PC-9 (cell line): ENCODE measurements at regions of chr5 and their contacts with region 1.

Region 1: DNA sequence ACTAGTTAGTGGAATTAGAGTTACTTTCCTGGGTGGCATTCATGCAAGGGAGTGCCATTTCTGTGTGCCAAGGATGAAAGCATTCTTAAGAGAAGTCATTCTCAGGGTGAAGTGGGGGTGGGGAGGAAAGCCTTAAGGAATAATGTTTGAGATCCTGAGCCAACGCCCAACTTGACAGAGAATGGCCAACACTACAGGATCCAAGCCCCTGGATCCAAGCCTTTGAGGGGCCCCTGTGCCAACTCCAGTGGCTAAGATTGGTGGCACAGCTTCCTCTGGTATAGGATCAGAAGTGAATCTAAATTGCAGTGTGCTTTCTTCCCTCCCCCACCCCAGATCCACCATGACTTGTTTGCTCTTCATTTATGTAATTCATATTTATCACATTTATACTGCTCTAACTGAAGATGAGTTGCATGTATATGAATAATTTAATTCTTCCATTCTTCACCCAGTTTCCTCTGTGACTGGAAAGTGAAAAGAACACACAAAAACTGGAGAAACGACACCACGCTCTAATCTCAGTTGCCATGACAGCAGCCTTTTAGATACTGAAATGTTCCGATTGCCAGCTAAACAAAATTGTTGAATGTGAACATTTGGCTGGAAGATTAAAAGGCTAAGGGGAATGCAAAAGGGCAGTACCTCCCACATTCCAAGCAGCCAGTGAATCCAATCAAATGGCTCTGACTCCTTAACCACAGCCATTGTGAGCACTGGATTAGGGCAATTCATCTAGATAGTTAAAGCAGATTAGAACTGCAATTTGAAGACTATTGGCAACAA is 4.5 kb downstream of the ZNF608 start:
- DNase-seq: peak; percentile 57 to 63
- H3K4me3 ChIP-seq: no peak overlapping the region
- H3K27ac ChIP-seq: no peak overlapping the region
- H3K4me1 ChIP-seq: peaks cover 19% of the 10 kb centered on the region
- H3K27me3 ChIP-seq: no peaks in the 10 kb centered on the region
- CTCF ChIP-seq: no peak

Region 2: GRCh38 chr5:122845229-122846050 is 1896.5 kb before region 1 on chr5 and contains the start of gene SNX24:
- CTCF ChIA-PET with region 1: no interaction called
- POLR2A ChIA-PET with region 1: no interaction called
- intact Hi-C with region 1: loop called (anchors 5 kb)
- DNase-seq: peak; percentile 70 to 76
- H3K4me3 ChIP-seq: peak within 1 kb of the TSS; percentile 64
- H3K27ac ChIP-seq: peak within 1 kb of the TSS; percentile 87
- H3K4me1 ChIP-seq: peaks cover 55% of the 10 kb centered on the region
- H3K27me3 ChIP-seq: no peaks in the 10 kb centered on the region
- CTCF ChIP-seq: no peak
- total RNA-seq, gene SNX24: 21.5 and 22.3 TPM in 2 replicates

Region 3: GRCh38 chr5:124583469-124584350 is 158.2 kb before region 1 on chr5:
- CTCF ChIA-PET with region 1: no interaction called
- POLR2A ChIA-PET with region 1: no interaction called
- intact Hi-C with region 1: loop called (anchors 5 kb)
- DNase-seq: peak; percentile 16 to 77
- H3K4me3 ChIP-seq: no peak overlapping the region
- H3K27ac ChIP-seq: peak overlapping the region; percentile 28
- H3K4me1 ChIP-seq: peaks cover 12% of the 10 kb centered on the region
- H3K27me3 ChIP-seq: no peaks in the 10 kb centered on the region
- CTCF ChIP-seq: no peak

Region 4: GRCh38 chr5:124628721-124629596 is 112.9 kb before region 1 on chr5:
- CTCF ChIA-PET with region 1: no interaction called
- POLR2A ChIA-PET with region 1: no interaction called
- intact Hi-C with region 1: loop called (anchors 1 kb)
- DNase-seq: peak; percentile 85 to 86
- H3K4me3 ChIP-seq: peak overlapping the region; percentile 27; the same call in 1 of the 2 replicates
- H3K27ac ChIP-seq: peak overlapping the region; percentile 24
- H3K4me1 ChIP-seq: peaks cover 30% of the 10 kb centered on the region
- H3K27me3 ChIP-seq: no peaks in the 10 kb centered on the region
- CTCF ChIP-seq: no peak

Region 5: GRCh38 chr5:124661317-124662141 is 80.4 kb before region 1 on chr5:
- CTCF ChIA-PET with region 1: interaction called, 7 read pairs
- POLR2A ChIA-PET with region 1: interaction called, 29 read pairs
- intact Hi-C with region 1: loop called (anchors 1 kb)
- DNase-seq: peak; percentile 70 to 98
- H3K4me3 ChIP-seq: peak overlapping the region; percentile 29; the same call in 1 of the 2 replicates
- H3K27ac ChIP-seq: peak overlapping the region; percentile 81
- H3K4me1 ChIP-seq: peaks cover 67% of the 10 kb centered on the region
- H3K27me3 ChIP-seq: no peaks in the 10 kb centered on the region
- CTCF ChIP-seq: no peak

Region 6: DNA sequence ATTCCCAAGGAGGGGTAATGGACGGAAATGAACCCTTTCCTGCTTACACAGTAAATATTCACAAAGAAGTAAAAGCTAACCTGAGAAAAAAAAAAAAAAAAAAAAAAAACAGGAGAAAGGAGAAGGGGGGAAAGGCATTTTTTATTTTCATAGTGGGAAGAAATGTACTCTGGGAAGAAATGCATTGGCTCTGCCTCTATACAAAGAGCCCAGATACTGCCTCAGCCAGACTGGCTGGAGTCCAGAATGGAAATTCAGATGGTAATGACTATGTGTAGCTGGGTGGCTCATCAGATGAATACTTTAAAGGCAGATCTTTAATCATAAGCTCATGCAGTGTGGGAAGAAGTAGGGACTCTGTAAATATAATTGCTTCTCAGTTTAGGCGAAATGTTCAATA is 129.4 kb after region 1 on chr5:
- CTCF ChIA-PET with region 1: no interaction called
- POLR2A ChIA-PET with region 1: no interaction called
- intact Hi-C with region 1: no loop called
- DNase-seq: no peak
- H3K4me3 ChIP-seq: no peak overlapping the region
- H3K27ac ChIP-seq: no peak overlapping the region
- H3K4me1 ChIP-seq: no peaks in the 10 kb centered on the region
- H3K27me3 ChIP-seq: no peaks in the 10 kb centered on the region
- CTCF ChIP-seq: no peak